Heart right ventricle (tissue), 16 donors: ENCODE measurements at regions of chr7 and their contacts with region 1.

Region 1: GRCh38 chr7:16071246-16071857 is 350.0 kb downstream of the CRPPA start:
- DNase-seq: no peak
- ATAC-seq: peak in 5 of 8 donors; percentile 34 to 73 (median 55)
- H3K4me3 ChIP-seq: peak overlapping the region in 5 of 10 donors; percentile 1 to 26 (median 3)
- H3K27ac ChIP-seq: peak overlapping the region in 5 of 10 donors; percentile 40 to 85 (median 83)
- H3K4me1 ChIP-seq: peaks cover 0 to 43% (median 15%) of the 10 kb centered on the region in 9 donors
- H3K27me3 ChIP-seq: no peaks in the 10 kb centered on the region
- CTCF ChIP-seq: peak; percentile 79 to 92 (median 84)

Region 2: DNA sequence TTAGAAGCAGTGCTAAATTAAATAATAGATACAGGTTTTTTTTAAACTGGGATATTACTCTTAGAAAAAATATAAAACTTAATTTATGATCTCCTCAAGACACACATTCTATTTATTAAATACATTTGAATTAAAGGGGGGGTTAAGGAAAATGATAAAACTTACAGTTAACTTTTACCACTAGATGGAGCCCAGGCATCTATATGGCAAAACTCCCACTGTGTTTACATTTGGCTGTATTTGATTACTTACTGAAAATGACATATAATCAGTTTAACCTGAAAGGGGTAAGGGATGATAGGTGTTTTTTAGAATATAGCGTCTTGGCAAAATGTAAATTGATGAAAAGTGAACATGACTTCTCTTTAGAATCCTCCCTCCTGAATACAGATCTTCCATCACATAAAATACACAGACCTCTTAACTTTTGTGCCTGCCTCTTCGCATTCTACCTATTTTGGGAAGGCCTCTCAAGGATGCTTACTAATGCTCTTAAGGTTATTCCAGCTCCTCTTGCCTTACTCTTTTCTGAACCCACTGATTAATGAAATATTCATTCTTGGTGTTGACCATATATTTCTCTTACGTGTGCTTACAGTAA is 745.2 kb before region 1 on chr7:
- intact Hi-C with region 1: loop called in 9 of 10 experiments (anchors 1 to 10 kb)
- DNase-seq: no peak
- ATAC-seq: no peak
- H3K4me3 ChIP-seq: no peak overlapping the region
- H3K27ac ChIP-seq: no peak overlapping the region
- H3K4me1 ChIP-seq: peaks cover 0 to 10% (median 0%) of the 10 kb centered on the region in 9 donors
- H3K27me3 ChIP-seq: no peaks in the 10 kb centered on the region
- CTCF ChIP-seq: peak; percentile 32 to 79 (median 60)

Region 3: GRCh38 chr7:15561835-15562234 is 509.5 kb before region 1 on chr7 and contains the start of gene AGMO:
- intact Hi-C with region 1: loop called in 5 of 10 experiments (anchors 5 to 10 kb)
- DNase-seq: peak; percentile 69 to 76
- ATAC-seq: peak; percentile 61 to 87 (median 78)
- H3K4me3 ChIP-seq: peak within 1 kb of the TSS in 9 of 10 donors; percentile 11 to 48 (median 39)
- H3K27ac ChIP-seq: peak within 1 kb of the TSS; percentile 62 to 89 (median 71)
- H3K4me1 ChIP-seq: peaks cover 0 to 49% (median 8%) of the 10 kb centered on the region in 9 donors
- H3K27me3 ChIP-seq: no peaks in the 10 kb centered on the region
- CTCF ChIP-seq: peak in 5 of 9 donors; percentile 8 to 43 (median 35)
- total RNA-seq, gene AGMO: 0.12 to 0.70 (median 0.40) TPM

Region 4: GRCh38 chr7:15686295-15686956 is 384.9 kb before region 1 on chr7 and contains the start of gene MEOX2:
- intact Hi-C with region 1: loop called in 8 of 10 experiments (anchors 2 to 10 kb)
- DNase-seq: peak; percentile 86 to 91
- ATAC-seq: peak; percentile 90 to 96 (median 94)
- H3K4me3 ChIP-seq: peak within 1 kb of the TSS; percentile 62 to 79 (median 70)
- H3K27ac ChIP-seq: peak within 1 kb of the TSS; percentile 86 to 95 (median 90)
- H3K4me1 ChIP-seq: peaks cover 0 to 16% (median 0%) of the 10 kb centered on the region in 9 donors
- H3K27me3 ChIP-seq: peaks cover 0 to 60% (median 5%) of the 10 kb centered on the region in 7 donors
- CTCF ChIP-seq: no peak
- total RNA-seq, gene MEOX2: 5.2 to 13.5 (median 7.9) TPM

Region 5: DNA sequence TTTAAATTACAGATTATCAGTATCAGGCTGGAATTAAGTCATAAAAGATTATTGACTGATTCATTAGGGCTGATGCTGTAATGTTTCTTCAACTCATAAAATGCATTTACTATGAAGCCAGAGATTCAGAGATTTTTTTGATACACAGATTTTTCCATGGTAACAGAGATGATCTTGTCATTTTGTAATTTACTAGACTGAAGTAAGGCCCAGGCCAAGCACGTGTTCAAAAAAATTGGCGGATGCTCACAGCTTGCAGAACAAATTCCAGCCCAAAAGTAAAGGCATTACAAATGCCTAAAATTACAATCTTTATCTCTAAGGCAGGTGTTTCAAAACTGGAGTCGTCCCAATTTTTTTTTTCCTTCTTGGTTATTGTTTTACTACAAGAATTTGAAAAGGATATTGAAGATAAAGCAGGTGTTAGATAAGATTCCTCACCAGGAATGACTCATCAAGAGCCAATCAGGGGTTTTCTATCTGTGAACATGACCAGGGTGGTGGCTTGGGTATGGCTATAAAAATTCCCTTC is 306.4 kb before region 1 on chr7:
- intact Hi-C with region 1: loop called in 3 of 10 experiments (anchors 5 to 10 kb)
- DNase-seq: peak in 1 of 2 donors; percentile 60
- ATAC-seq: peak; percentile 50 to 86 (median 81)
- H3K4me3 ChIP-seq: no peak overlapping the region
- H3K27ac ChIP-seq: peak overlapping the region in 9 of 10 donors; percentile 25 to 84 (median 55)
- H3K4me1 ChIP-seq: peaks cover 0 to 32% (median 14%) of the 10 kb centered on the region in 9 donors
- H3K27me3 ChIP-seq: no peaks in the 10 kb centered on the region
- CTCF ChIP-seq: no peak

Region 6: DNA sequence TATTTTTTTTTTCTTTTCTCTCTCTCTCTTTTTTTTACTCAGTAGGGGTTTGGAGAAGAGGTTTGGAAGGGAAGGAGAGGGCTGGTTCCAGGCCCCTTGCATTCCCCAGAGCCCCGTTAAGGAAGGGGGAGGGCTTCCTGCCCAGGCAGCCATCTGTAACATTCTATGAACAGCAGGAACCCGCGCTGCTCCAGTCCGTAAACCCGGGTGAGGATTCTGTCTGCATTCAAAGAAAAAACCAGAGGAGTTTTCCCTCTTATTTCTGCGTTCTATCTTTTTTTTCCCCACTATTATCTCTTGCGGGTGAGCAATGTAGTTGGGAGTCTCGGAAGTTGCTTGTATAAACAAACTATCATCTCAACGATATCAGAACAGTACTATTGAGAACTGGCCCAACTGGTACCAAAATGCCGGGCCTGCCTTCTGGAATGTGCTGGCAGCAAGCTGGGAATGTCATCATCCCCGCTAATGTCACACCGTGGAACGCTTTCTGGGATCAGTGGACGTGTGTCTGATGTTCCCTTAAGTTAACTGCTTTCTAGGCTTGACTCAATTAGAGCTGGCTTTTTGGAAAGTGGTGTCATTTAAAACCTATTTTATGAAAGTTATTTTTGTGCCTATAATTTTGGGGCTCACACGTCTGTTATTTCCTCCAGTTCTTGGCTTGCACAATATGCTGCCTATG is 231.8 kb before region 1 on chr7:
- intact Hi-C with region 1: loop called in 3 of 10 experiments (anchors 5 to 10 kb)
- DNase-seq: peak; percentile 69 to 83
- ATAC-seq: peak; percentile 91 to 99 (median 98)
- H3K4me3 ChIP-seq: peak overlapping the region in 9 of 10 donors; percentile 20 to 55 (median 43)
- H3K27ac ChIP-seq: peak overlapping the region; percentile 46 to 95 (median 80)
- H3K4me1 ChIP-seq: peaks cover 0 to 43% (median 16%) of the 10 kb centered on the region in 9 donors
- H3K27me3 ChIP-seq: no peaks in the 10 kb centered on the region
- CTCF ChIP-seq: no peak

Region 7: GRCh38 chr7:16046041-16046440 is 25.3 kb before region 1 on chr7:
- intact Hi-C with region 1: no loop called
- DNase-seq: no peak
- ATAC-seq: no peak
- H3K4me3 ChIP-seq: no peak overlapping the region
- H3K27ac ChIP-seq: no peak overlapping the region
- H3K4me1 ChIP-seq: peaks cover 0 to 2% (median 0%) of the 10 kb centered on the region in 9 donors
- H3K27me3 ChIP-seq: no peaks in the 10 kb centered on the region
- CTCF ChIP-seq: no peak